Caco-2 (cell line): ENCODE measurements at regions of chr7 and their contacts with region 1.

Region 1: GRCh38 chr7:149742075-149742701 is 31.2 kb downstream of the ZNF467 start:
- DNase-seq: peak; percentile 74 to 82
- H3K4me3 ChIP-seq: peak overlapping the region; percentile 24
- H3K4me3 Mint-ChIP-seq: peak overlapping the region; percentile 75
- H3K27ac Mint-ChIP-seq: peak overlapping the region; percentile 20
- H3K4me1 ChIP-seq: no peaks in the 10 kb centered on the region
- H3K4me1 Mint-ChIP-seq: peaks cover 6% of the 10 kb centered on the region
- H3K27me3 ChIP-seq: no peaks in the 10 kb centered on the region
- H3K27me3 Mint-ChIP-seq: no peaks in the 10 kb centered on the region
- CTCF ChIP-seq: peak; percentile 90 to 95

Region 2: DNA sequence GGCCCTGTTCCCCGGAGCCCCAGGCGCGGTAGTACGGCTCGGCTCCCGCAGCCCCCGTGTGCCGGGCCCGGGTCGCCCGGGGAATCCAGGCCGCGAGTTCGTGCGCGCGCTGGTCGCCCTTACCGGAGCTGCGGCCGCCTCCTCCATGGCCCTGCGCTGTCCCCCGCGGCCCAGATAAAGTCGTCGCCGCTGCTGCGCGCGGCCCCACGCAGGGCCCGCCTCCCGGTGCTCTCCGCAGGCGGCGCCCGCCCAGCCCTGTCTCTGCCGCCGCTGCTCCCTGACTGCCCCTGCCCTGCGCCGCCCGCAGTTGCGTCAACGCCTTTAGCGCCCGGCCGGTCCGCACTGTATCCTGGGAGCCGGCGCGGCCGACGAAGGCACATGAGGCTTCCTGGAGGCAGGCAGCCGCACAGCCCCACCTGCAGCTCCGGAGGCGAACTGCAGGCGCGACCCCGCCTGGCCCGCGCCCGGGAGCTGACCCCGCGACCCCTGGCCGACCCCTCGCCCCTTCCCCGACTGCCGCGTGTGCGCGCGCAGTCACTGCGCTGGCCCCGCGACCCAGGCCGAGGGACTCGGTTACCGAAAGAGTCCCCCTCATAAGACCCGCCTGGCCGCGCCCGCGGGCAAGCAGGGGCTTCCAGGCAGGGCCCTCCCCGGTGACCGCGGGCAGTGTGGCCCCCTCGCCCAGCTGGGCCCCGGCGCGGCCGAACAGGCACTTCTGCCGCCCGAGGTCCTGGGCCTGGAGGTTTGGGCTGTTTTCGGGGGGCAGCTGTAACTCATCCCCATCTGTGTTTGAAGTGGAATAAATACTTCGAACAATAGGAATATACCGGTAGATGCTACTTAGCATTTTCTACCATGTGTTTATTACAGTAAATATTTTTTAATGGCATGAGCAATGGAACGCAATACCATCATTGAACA is 117.5 kb before region 1 on chr7:
- CTCF ChIA-PET with region 1: no interaction called
- POLR2A ChIA-PET with region 1: no interaction called
- intact Hi-C with region 1: loop called (anchors 2 kb)
- DNase-seq: peak; percentile 94 to 97
- H3K4me3 ChIP-seq: peak overlapping the region; percentile 89
- H3K4me3 Mint-ChIP-seq: peak overlapping the region; percentile 99
- H3K27ac Mint-ChIP-seq: peak overlapping the region; percentile 90
- H3K4me1 ChIP-seq: peaks cover 4% of the 10 kb centered on the region; the same call in 1 of the 2 replicates
- H3K4me1 Mint-ChIP-seq: peaks cover 6% of the 10 kb centered on the region
- H3K27me3 ChIP-seq: no peaks in the 10 kb centered on the region
- H3K27me3 Mint-ChIP-seq: no peaks in the 10 kb centered on the region
- CTCF ChIP-seq: peak; percentile 86 to 96

Region 3: DNA sequence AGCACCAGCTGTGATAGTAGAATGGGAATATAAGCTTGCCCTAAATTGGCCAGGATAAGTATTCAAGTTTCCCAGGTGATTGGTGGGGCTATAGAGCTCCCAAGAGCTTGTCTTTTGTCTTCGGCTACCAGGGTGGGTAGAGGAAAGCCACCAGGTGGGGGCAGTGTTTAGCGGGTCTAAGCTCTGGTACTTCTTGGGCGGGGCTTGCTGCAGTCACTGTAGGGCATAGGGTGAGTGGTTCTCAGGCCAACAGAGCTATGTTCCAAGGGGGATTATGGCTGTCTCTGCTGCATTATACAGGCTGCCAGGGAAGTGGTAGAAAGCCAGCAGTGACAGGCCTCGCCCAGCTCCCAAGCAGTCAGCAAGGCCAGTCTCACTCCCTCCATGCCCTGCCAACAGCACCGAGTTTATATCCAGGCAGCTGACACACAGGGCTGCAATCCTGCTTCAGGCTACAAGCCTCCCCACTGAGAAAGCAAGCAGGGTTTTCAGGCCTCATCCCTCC is 79.5 kb before region 1 on chr7:
- CTCF ChIA-PET with region 1: interaction called, 53 read pairs
- POLR2A ChIA-PET with region 1: no interaction called
- intact Hi-C with region 1: loop called (anchors 1 kb)
- DNase-seq: peak; percentile 66 to 70
- H3K4me3 ChIP-seq: no peak overlapping the region
- H3K4me3 Mint-ChIP-seq: no peak overlapping the region
- H3K27ac Mint-ChIP-seq: no peak overlapping the region
- H3K4me1 ChIP-seq: no peaks in the 10 kb centered on the region
- H3K4me1 Mint-ChIP-seq: no peaks in the 10 kb centered on the region
- H3K27me3 ChIP-seq: no peaks in the 10 kb centered on the region
- H3K27me3 Mint-ChIP-seq: peaks cover 12% of the 10 kb centered on the region
- CTCF ChIP-seq: peak; percentile 38 to 69

Region 4: DNA sequence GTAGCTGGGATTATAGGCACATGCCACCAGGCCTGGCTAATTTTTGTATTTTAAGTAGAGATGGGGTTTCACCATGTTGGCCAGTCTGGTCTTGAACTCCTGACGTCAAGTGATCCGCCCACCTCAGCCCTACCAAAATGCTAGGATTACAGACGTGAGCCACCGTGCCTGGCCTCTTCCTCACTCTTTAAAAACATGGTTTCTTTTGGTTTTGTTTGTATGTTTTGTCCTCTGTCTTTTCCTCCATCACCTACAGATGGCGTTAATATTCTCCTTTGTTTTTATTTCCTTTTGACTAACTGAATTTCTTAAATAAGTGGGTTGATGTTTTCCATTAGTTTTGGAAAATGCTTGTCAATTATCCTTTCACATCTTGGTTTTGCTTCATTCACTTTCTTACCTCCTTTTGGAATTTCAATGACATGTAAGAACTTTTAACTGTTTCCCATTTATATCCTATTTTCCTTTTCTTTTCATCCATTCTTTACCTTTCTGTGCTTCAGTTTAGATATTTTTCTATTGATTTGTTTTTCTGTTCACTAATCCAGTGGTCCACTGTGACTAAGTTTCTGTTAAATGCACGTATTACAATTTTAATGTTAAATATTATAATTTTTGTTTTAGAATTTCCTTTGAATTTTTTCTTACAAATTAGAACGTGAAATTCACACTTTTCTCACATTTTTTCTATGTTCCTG is 72.9 kb before region 1 on chr7:
- CTCF ChIA-PET with region 1: interaction called, 4 read pairs
- POLR2A ChIA-PET with region 1: no interaction called
- intact Hi-C with region 1: loop called (anchors 1 kb)
- DNase-seq: no peak
- H3K4me3 ChIP-seq: no peak overlapping the region
- H3K4me3 Mint-ChIP-seq: no peak overlapping the region
- H3K27ac Mint-ChIP-seq: no peak overlapping the region
- H3K4me1 ChIP-seq: no peaks in the 10 kb centered on the region
- H3K4me1 Mint-ChIP-seq: no peaks in the 10 kb centered on the region
- H3K27me3 ChIP-seq: no peaks in the 10 kb centered on the region; the same call in 1 of the 2 replicates
- H3K27me3 Mint-ChIP-seq: peaks cover 17% of the 10 kb centered on the region
- CTCF ChIP-seq: no peak